Activated naive CD4-positive, alpha-beta T cell treated with anti-CD3 and anti-CD28 coated beads for 36 hours (primary cell): ENCODE measurements at regions of chr17 and their contacts with region 1.

Region 1: DNA sequence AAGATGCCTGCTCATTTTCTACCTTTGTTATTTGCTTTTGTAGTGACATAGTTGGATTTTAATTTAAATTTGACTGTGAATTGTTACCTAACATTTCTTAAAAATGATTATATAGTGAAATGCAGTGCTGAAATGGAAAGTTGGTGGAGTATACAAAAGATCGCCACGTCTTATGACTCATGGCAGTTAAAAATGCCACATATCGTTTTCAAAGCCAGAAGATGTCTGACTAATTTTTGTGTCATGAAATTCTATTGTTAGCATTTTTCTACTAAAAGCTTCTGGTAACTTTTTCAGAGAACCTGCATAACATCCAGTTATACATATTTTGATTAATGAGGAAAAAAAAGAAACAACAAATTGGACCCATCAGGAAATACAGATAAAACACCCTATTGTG is 20.6 kb downstream of the MAP2K4 start:
- DNase-seq: peak; percentile 8
- H3K4me3 Mint-ChIP-seq: no peak overlapping the region
- H3K27ac Mint-ChIP-seq: peak overlapping the region; percentile 50
- H3K4me1 Mint-ChIP-seq: peaks cover 54% of the 10 kb centered on the region
- H3K27me3 Mint-ChIP-seq: no peaks in the 10 kb centered on the region

Region 2: GRCh38 chr17:12020642-12021622 is 20.4 kb before region 1 on chr17 and contains the start of gene MAP2K4:
- CTCF ChIA-PET with region 1: no interaction called
- intact Hi-C with region 1: loop called (anchors 2 kb)
- DNase-seq: peak; percentile 93
- H3K4me3 Mint-ChIP-seq: peak within 1 kb of the TSS; percentile 73
- H3K27ac Mint-ChIP-seq: peak within 1 kb of the TSS; percentile 73
- H3K4me1 Mint-ChIP-seq: peaks cover 45% of the 10 kb centered on the region
- H3K27me3 Mint-ChIP-seq: no peaks in the 10 kb centered on the region
- total RNA-seq, gene MAP2K4: 22.5 to 23.5 TPM

Region 3: GRCh38 chr17:12107905-12108304 is 66.6 kb after region 1 on chr17:
- CTCF ChIA-PET with region 1: no interaction called
- intact Hi-C with region 1: no loop called
- DNase-seq: no peak
- H3K4me3 Mint-ChIP-seq: no peak overlapping the region
- H3K27ac Mint-ChIP-seq: no peak overlapping the region
- H3K4me1 Mint-ChIP-seq: peaks cover 3% of the 10 kb centered on the region
- H3K27me3 Mint-ChIP-seq: no peaks in the 10 kb centered on the region